CD4-positive, alpha-beta T cell (primary cell): ENCODE measurements at regions of chr15 and their contacts with region 1.

Region 1: DNA sequence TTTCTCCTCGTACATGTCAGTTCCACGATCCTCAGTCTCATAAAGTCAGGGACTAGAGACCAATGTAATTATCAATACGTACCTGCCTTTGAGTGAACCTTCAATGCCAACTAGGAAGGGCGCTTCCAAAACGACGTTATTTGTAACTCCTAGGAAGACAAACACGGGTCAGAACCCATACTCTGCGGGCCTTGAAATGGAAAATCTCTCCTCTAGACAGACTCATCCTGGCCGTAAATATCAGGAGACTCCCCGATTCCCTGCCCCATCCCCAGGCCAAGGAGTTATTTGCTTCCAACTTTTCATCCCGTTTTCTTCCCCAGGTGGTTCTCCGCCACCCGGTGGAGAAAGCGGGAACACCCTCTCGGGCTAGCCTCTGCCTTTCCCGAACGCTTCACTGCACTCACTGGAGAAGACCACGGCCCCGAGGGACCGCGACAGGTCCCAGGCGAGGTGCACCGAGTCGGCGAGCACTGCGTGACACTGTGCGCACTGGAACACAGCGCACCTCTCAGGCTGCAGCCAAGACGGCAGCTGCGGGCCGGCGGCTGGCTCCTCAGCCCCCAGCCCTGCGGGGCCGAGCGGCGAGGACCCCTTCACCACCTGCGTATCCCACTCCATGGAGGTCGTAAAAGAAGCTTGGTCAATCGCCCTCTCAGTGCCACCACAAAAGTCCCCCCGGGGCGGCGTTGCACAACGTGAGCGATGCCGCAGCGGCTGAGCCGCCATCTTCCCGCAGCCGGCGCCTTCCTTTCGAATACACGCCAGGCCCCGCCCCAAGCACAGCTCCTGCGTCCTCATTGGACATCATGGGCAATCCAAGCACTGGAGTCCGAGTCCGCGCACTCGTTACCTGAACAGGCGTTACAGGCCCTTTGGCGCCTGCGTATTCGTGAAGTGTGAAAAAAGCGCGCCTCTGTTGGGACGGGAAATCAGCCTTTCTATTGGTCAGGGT is at the start of gene OIP5:
- DNase-seq: peak; percentile 94 to 99 (median 97)
- ATAC-seq: peak; percentile 96
- H3K4me3 ChIP-seq: peak within 1 kb of the TSS; percentile 77
- H3K4me3 Mint-ChIP-seq: peak within 1 kb of the TSS; percentile 95
- H3K27ac ChIP-seq: peak within 1 kb of the TSS in 1 of 2 donors; percentile 38
- H3K27ac Mint-ChIP-seq: peak within 1 kb of the TSS; percentile 78
- H3K4me1 ChIP-seq: peaks cover 21% of the 10 kb centered on the region
- H3K4me1 Mint-ChIP-seq: peaks cover 19% of the 10 kb centered on the region
- H3K27me3 ChIP-seq: no peaks in the 10 kb centered on the region
- H3K27me3 Mint-ChIP-seq: no peaks in the 10 kb centered on the region
- CTCF ChIP-seq: peak; percentile 58
- total RNA-seq, gene OIP5: 0.20 to 0.36 TPM

Region 2: DNA sequence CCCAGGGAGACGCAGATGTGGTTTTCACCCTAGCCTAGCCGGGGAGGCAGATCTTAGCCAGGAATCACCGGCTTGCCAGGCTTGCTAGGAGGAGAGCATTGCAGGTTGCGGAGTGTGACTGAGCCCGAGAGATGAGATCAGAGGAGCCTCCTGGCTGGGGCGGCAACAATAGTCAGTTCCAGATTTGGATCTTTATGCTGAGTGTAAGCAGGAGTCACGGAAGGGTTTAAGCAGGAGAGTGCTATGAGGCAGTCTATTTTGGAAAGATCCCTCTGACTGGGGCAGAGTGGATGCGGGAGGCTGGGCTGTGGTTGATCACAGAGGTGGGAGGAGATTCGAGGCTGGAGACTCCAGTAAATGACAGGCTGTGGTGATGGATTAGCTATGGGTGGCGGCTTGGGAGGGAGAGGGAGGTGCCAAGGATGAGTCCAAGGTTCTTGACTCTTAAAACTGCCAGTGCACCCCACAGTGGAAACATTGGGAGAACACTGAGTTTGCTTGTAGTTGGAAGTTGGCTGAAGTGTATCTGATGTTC is 901.8 kb before region 1 on chr15:
- CTCF ChIA-PET with region 1: no interaction called
- POLR2A ChIA-PET with region 1: no interaction called
- intact Hi-C with region 1: no loop called
- DNase-seq: no peak
- ATAC-seq: no peak
- H3K4me3 ChIP-seq: no peak overlapping the region
- H3K4me3 Mint-ChIP-seq: no peak overlapping the region
- H3K27ac ChIP-seq: no peak overlapping the region
- H3K27ac Mint-ChIP-seq: no peak overlapping the region
- H3K4me1 ChIP-seq: peaks cover 4% of the 10 kb centered on the region
- H3K4me1 Mint-ChIP-seq: peaks cover 5% of the 10 kb centered on the region
- H3K27me3 ChIP-seq: no peaks in the 10 kb centered on the region
- H3K27me3 Mint-ChIP-seq: no peaks in the 10 kb centered on the region
- CTCF ChIP-seq: no peak

Region 3: DNA sequence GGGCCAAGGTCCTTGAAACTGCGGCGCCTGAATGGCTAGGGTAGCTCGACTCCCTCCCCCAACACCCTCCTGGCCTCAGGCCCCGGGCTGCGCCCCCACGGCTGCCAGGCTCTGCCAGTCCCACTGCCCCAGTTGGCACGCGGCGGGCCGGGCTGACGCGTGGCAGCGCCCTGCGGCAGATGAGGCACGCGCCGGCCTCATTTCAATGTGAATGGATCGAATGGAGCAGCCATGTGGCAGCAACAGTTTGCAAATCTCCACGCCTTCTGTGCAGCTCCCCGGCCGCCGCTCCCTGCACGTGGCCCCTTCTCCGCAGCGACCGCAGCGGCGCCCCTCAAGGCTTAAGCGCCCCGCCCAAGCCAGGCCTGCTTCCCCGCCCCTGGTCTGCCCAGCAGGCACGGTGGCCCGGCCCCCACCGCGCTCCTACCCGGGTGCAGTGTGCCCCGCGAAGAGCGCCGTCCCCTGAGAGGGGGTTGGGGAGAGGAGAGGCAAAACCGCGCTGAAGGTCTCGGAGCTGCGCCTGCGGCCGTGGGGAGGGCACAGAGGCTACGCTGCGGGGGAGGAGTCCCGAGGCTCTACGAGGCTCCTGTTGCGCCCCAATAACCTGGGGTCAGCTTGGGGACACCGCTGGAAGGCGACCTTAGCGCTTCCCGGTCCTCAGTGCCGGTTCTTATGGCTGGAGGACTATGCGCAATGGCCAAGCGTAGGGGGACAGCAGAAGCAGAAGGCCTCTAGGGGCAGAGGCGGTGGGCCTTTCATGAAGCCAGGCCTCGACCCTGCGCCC is 406.0 kb before region 1 on chr15:
- CTCF ChIA-PET with region 1: no interaction called
- POLR2A ChIA-PET with region 1: no interaction called
- intact Hi-C with region 1: no loop called
- DNase-seq: peak in 1 of 14 experiments; percentile 39
- ATAC-seq: peak; percentile 18
- H3K4me3 ChIP-seq: peak overlapping the region; percentile 33
- H3K4me3 Mint-ChIP-seq: peak overlapping the region; percentile 38
- H3K27ac ChIP-seq: no peak overlapping the region
- H3K27ac Mint-ChIP-seq: no peak overlapping the region
- H3K4me1 ChIP-seq: peaks cover 58% of the 10 kb centered on the region
- H3K4me1 Mint-ChIP-seq: peaks cover 45% of the 10 kb centered on the region
- H3K27me3 ChIP-seq: peaks cover 55 to 60% of the 10 kb centered on the region in 2 experiments
- H3K27me3 Mint-ChIP-seq: peaks cover 63% of the 10 kb centered on the region
- CTCF ChIP-seq: no peak

Region 4: GRCh38 chr15:40952901-40953712 is 379.0 kb before region 1 on chr15 and contains the start of gene CHAC1:
- CTCF ChIA-PET with region 1: no interaction called
- POLR2A ChIA-PET with region 1: no interaction called
- intact Hi-C with region 1: loop called in 1 of 2 experiments (anchors 5 kb)
- DNase-seq: peak; percentile 87 to 98 (median 93)
- ATAC-seq: peak; percentile 96
- H3K4me3 ChIP-seq: peak within 1 kb of the TSS; percentile 81
- H3K4me3 Mint-ChIP-seq: peak within 1 kb of the TSS; percentile 96
- H3K27ac ChIP-seq: no peak within 1 kb of the TSS
- H3K27ac Mint-ChIP-seq: peak within 1 kb of the TSS; percentile 82
- H3K4me1 ChIP-seq: peaks cover 18% of the 10 kb centered on the region
- H3K4me1 Mint-ChIP-seq: peaks cover 10% of the 10 kb centered on the region
- H3K27me3 ChIP-seq: peaks cover 0 to 4% of the 10 kb centered on the region in 2 experiments
- H3K27me3 Mint-ChIP-seq: no peaks in the 10 kb centered on the region
- CTCF ChIP-seq: peak; percentile 20
- total RNA-seq, gene CHAC1: 0.42 to 0.47 TPM

Region 5: DNA sequence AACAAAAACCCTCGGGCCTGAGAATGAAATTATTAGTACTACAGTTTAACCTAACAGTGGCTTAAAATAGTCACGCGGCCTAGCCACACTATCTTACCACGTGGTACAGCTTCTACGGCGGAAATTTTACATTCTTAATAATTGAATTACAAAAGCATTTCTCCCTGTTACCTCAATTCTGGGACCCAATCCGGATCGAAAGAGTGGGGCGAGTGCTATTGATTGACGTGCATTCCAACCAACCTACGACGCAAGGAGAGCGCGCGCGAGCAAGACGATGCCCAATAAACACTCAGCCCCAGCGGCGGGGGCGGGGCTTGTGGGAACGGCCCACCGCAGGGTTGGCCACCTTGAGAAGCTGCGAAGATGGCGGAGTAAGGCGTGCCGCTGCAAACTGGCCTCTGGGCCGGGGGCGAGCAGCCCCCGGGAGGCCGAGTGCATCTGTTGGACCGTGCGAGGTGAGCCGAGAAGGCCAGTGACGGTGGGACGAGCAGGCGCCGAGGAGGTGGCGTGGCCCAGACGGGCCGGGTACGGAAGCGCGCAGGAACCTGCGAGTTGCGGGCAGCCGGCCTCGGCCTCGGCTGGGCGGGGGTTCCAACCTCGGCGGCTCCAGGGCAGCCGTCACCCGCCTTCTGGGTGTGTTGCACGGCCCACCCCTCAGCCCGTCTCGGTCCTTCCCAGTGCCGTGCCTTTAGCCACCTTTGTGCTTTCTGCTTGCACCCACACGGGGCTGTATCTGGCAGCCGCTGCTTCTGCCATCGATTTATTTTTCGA is 48.3 kb before region 1 on chr15:
- CTCF ChIA-PET with region 1: no interaction called
- POLR2A ChIA-PET with region 1: interaction called, 24 read pairs
- intact Hi-C with region 1: loop called (anchors 2 kb)
- DNase-seq: peak; percentile 94 to 99 (median 97)
- ATAC-seq: peak; percentile 96
- H3K4me3 ChIP-seq: peak overlapping the region; percentile 80
- H3K4me3 Mint-ChIP-seq: peak overlapping the region; percentile 91
- H3K27ac ChIP-seq: peak overlapping the region; percentile 83 to 86
- H3K27ac Mint-ChIP-seq: peak overlapping the region; percentile 91
- H3K4me1 ChIP-seq: peaks cover 29% of the 10 kb centered on the region
- H3K4me1 Mint-ChIP-seq: peaks cover 50% of the 10 kb centered on the region
- H3K27me3 ChIP-seq: no peaks in the 10 kb centered on the region
- H3K27me3 Mint-ChIP-seq: no peaks in the 10 kb centered on the region
- CTCF ChIP-seq: no peak